Mammary epithelial cell (primary cell): ENCODE measurements at regions of chr13 and their contacts with region 1.

Region 1: DNA sequence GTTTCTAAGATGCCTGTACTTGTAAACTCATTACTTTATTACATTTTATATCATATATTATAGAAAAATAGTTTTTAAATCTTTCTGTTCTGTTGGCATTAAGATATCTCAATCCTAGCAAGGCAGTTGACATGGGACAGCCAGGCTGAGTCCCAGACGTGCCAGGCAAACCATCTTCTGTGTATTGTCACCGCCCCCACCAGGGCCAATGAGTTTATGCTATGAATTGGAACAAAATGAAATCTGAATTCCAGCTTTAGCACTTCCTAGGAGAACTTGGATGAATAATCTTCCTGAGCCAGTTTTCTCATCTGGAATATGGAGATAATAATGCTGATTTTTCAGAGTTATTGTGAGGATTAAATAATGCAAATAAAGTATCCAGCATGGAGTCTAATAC is 79.9 kb upstream of the GSX1 start:
- DNase-seq: no peak
- H3K4me3 ChIP-seq: no peak overlapping the region
- H3K27ac ChIP-seq: no peak overlapping the region
- H3K4me1 ChIP-seq: no peaks in the 10 kb centered on the region
- H3K27me3 ChIP-seq: peaks cover 1% of the 10 kb centered on the region
- CTCF ChIP-seq: peak in 1 of 2 donors; percentile 32

Region 2: GRCh38 chr13:26914624-26915023 is 797.8 kb before region 1 on chr13:
- CTCF ChIA-PET with region 1: no interaction called
- dilution Hi-C with region 1: no loop called
- in situ Hi-C with region 1: no loop called
- intact Hi-C with region 1: no loop called
- DNase-seq: peak; percentile 86
- H3K4me3 ChIP-seq: no peak overlapping the region
- H3K27ac ChIP-seq: no peak overlapping the region
- H3K4me1 ChIP-seq: peaks cover 13% of the 10 kb centered on the region
- H3K27me3 ChIP-seq: no peaks in the 10 kb centered on the region
- CTCF ChIP-seq: no peak

Region 3: GRCh38 chr13:27203854-27204253 is 508.6 kb before region 1 on chr13:
- CTCF ChIA-PET with region 1: no interaction called
- dilution Hi-C with region 1: no loop called
- in situ Hi-C with region 1: no loop called
- intact Hi-C with region 1: no loop called
- DNase-seq: peak; percentile 15
- H3K4me3 ChIP-seq: no peak overlapping the region
- H3K27ac ChIP-seq: no peak overlapping the region
- H3K4me1 ChIP-seq: no peaks in the 10 kb centered on the region
- H3K27me3 ChIP-seq: no peaks in the 10 kb centered on the region
- CTCF ChIP-seq: peak; percentile 19 to 52

Region 4: GRCh38 chr13:27533155-27533643 is 179.2 kb before region 1 on chr13:
- CTCF ChIA-PET with region 1: no interaction called
- dilution Hi-C with region 1: no loop called
- in situ Hi-C with region 1: no loop called
- intact Hi-C with region 1: loop called (anchors 2 kb)
- DNase-seq: peak; percentile 62
- H3K4me3 ChIP-seq: no peak overlapping the region
- H3K27ac ChIP-seq: no peak overlapping the region
- H3K4me1 ChIP-seq: peaks cover 4% of the 10 kb centered on the region
- H3K27me3 ChIP-seq: no peaks in the 10 kb centered on the region
- CTCF ChIP-seq: peak; percentile 78 to 97